Transverse colon (tissue), 4 donors: ENCODE measurements at regions of chr1 and their contacts with region 1.

Region 1: DNA sequence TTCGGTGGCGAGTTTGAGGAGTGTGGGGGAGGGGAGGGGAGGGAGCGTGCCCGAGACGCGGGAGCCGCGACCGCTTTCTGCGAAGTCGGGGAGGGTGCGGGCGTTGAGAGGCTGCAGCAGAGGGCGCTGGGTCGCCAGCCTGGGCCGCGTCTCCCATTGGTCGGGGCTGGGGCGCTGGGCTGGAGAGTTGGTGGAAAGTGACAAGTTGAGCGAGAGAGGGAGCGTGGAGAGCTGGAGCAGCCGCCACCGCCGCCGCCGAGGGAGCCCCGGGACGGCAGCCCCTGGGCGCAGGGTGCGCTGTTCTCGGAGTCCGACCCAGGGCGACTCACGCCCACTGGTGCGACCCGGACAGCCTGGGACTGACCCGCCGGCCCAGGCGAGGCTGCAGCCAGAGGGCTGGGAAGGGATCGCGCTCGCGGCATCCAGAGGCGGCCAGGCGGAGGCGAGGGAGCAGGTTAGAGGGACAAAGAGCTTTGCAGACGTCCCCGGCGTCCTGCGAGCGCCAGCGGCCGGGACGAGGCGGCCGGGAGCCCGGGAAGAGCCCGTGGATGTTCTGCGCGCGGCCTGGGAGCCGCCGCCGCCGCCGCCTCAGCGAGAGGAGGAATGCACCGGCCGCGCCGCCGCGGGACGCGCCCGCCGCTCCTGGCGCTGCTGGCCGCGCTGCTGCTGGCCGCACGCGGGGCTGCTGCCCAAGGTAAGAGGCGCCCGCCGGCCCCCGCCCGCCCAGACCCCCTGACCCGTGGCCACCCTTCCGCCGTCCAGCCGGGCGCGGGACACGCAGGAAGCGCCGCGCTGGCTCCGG is at the start of gene ROR1:
- DNase-seq: peak; percentile 89
- H3K4me3 ChIP-seq: peak within 1 kb of the TSS; percentile 52 to 79 (median 66)
- H3K27ac ChIP-seq: peak within 1 kb of the TSS; percentile 87 to 92 (median 88)
- H3K4me1 ChIP-seq: peaks cover 0 to 28% (median 7%) of the 10 kb centered on the region in 4 donors
- H3K27me3 ChIP-seq: peaks cover 9% of the 10 kb centered on the region
- CTCF ChIP-seq: peak; percentile 56 to 77 (median 64)
- EP300 ChIP-seq: no peak
- POLR2A ChIP-seq: peak; percentile 47
- total RNA-seq, gene ROR1: 3.0 to 6.7 (median 4.6) TPM

Region 2: GRCh38 chr1:63917571-63918417 is 143.8 kb after region 1 on chr1:
- in situ Hi-C with region 1: no loop called
- intact Hi-C with region 1: loop called (anchors 5 kb)
- DNase-seq: no peak
- H3K4me3 ChIP-seq: no peak overlapping the region
- H3K27ac ChIP-seq: no peak overlapping the region
- H3K4me1 ChIP-seq: peaks cover 12 to 41% (median 34%) of the 10 kb centered on the region in 4 donors
- H3K27me3 ChIP-seq: no peaks in the 10 kb centered on the region
- CTCF ChIP-seq: peak in 1 of 5 experiments; percentile 8
- EP300 ChIP-seq: no peak
- POLR2A ChIP-seq: no peak